ENCODE measurements at regions of chrX and their contacts with region 1.

Region 1: DNA sequence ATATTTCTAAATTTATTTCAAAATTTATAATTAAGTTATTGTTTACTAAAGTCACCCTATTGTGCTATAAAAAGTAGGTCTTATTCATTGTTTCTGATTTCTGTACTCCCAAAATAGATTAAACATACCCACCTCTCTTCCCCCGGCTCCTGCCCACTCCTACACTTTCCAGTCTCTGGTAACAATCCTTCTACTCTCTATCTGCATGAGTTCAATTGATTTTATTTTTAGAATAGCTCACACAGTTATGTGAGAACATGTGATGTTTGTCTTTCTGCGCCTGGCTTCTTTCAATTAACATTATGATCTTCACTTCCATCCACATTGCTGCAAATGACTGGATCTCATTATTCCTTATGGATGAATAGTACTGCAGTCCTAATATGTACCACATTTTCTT is 269.3 kb downstream of the ACTRT1 start:
- DNase-seq: no peak
- ATAC-seq: no peak

Region 2: GRCh38 chrX:127025013-127025412 is 757.9 kb before region 1 on chrX:
- intact Hi-C with region 1: loop called (anchors 5 kb)
- DNase-seq: no peak
- ATAC-seq: no peak